Activated naive CD4-positive, alpha-beta T cell treated with anti-CD3 and anti-CD28 coated beads for 36 hours (primary cell): ENCODE measurements at regions of chr6 and their contacts with region 1.

Region 1: GRCh38 chr6:42009966-42010891 is 40.1 kb upstream of the TAF8 start:
- DNase-seq: peak; percentile 86
- H3K4me3 Mint-ChIP-seq: peak overlapping the region; percentile 83
- H3K27ac Mint-ChIP-seq: peak overlapping the region; percentile 100
- H3K4me1 Mint-ChIP-seq: peaks cover 76% of the 10 kb centered on the region
- H3K27me3 Mint-ChIP-seq: no peaks in the 10 kb centered on the region

Region 2: GRCh38 chr6:41941280-41942066 is 68.8 kb before region 1 on chr6 and contains the start of gene CCND3:
- CTCF ChIA-PET with region 1: interaction called, 4 read pairs
- intact Hi-C with region 1: loop called (anchors 1 kb)
- DNase-seq: peak; percentile 93
- H3K4me3 Mint-ChIP-seq: peak within 1 kb of the TSS; percentile 100
- H3K27ac Mint-ChIP-seq: peak within 1 kb of the TSS; percentile 99
- H3K4me1 Mint-ChIP-seq: peaks cover 47% of the 10 kb centered on the region
- H3K27me3 Mint-ChIP-seq: no peaks in the 10 kb centered on the region
- total RNA-seq, gene CCND3: 1,152 to 1,165 TPM

Region 3: DNA sequence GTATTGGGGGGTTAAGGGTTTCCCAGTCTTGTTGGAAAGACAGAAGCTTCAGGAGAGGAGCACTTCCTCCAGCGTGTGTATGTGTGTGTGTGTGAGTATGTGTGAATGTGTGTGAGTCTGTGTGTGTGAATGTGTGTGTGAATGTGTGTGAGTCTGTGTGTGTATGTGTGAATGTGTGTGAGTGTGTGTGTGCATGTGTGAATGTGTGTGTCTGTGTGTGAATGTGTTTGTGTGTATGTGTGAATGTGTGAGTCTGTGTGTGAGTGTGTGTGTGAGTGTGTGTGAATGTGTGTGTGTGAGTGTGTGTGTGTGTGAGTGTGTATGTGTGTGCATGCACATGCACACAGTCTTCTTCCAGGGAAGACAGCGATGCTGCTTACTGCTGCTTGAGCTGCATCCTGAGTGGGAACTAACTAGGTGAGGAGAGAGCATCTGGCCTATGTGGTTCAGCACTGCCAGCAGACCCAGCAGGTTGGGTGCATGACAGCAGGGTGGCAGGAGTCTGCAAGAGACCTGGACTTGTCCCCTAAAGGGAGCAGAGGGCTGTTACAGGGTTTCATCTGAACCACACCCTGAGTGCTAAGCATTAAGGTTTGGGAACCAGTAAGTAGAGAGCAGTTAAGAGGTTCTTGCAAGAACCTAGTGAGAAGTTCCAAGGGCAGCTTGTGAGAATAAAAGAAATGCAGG is 45.9 kb before region 1 on chr6:
- CTCF ChIA-PET with region 1: interaction called, 4 read pairs
- intact Hi-C with region 1: loop called (anchors 1 kb)
- DNase-seq: peak; percentile 69
- H3K4me3 Mint-ChIP-seq: no peak overlapping the region
- H3K27ac Mint-ChIP-seq: peak overlapping the region; percentile 98
- H3K4me1 Mint-ChIP-seq: peaks cover 92% of the 10 kb centered on the region
- H3K27me3 Mint-ChIP-seq: no peaks in the 10 kb centered on the region

Region 4: GRCh38 chr6:41976794-41977484 is 33.3 kb before region 1 on chr6:
- CTCF ChIA-PET with region 1: no interaction called
- intact Hi-C with region 1: loop called (anchors 1 kb)
- DNase-seq: peak; percentile 81
- H3K4me3 Mint-ChIP-seq: peak overlapping the region; percentile 78
- H3K27ac Mint-ChIP-seq: peak overlapping the region; percentile 100
- H3K4me1 Mint-ChIP-seq: peaks cover 80% of the 10 kb centered on the region
- H3K27me3 Mint-ChIP-seq: no peaks in the 10 kb centered on the region

Region 5: DNA sequence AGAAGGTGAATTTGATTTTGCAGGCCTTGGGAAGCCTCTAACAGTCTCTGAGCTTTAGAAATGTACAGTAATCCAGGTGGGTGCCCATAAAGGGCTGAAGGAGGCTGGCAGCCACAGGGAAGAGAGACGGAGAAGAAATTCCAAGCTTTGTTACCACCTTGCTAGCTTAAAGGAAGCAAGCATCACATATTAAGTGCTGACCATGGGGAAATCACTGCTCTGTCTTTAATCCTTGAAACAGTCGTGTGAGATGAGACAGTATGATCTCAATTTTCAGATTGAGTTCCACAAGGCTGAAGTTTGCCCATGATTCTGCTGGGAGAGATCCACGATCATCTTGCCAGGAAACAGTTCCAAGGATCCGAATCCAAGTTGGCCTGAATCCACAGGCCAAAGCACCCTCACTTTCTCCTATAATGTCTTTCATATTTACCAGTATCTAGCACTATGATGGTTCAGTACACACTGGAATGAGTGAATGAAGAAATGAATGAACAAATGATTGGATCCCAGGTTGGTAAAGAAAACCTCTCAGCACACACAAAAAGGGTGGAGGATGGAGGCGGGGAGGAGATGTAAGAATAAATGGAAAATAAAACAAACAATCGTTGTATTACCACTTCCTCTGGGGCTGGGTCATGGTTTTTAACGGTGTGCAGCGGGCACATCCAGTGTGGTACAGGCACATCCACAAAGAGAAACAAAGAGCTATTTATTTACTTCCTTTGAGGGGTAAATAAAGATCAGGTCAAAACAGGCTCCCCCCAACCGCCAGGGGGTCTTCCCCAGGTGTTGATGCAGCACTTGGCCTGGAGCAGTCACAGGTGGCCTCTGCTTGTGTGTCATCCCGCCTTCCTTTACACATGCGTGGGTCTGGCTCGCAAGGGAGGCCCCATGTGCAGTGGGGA is 11.9 kb after region 1 on chr6:
- CTCF ChIA-PET with region 1: interaction called, 4 read pairs
- intact Hi-C with region 1: loop called (anchors 1 kb)
- DNase-seq: peak; percentile 91
- H3K4me3 Mint-ChIP-seq: peak overlapping the region; percentile 63
- H3K27ac Mint-ChIP-seq: peak overlapping the region; percentile 99
- H3K4me1 Mint-ChIP-seq: peaks cover 89% of the 10 kb centered on the region
- H3K27me3 Mint-ChIP-seq: no peaks in the 10 kb centered on the region

Region 6: DNA sequence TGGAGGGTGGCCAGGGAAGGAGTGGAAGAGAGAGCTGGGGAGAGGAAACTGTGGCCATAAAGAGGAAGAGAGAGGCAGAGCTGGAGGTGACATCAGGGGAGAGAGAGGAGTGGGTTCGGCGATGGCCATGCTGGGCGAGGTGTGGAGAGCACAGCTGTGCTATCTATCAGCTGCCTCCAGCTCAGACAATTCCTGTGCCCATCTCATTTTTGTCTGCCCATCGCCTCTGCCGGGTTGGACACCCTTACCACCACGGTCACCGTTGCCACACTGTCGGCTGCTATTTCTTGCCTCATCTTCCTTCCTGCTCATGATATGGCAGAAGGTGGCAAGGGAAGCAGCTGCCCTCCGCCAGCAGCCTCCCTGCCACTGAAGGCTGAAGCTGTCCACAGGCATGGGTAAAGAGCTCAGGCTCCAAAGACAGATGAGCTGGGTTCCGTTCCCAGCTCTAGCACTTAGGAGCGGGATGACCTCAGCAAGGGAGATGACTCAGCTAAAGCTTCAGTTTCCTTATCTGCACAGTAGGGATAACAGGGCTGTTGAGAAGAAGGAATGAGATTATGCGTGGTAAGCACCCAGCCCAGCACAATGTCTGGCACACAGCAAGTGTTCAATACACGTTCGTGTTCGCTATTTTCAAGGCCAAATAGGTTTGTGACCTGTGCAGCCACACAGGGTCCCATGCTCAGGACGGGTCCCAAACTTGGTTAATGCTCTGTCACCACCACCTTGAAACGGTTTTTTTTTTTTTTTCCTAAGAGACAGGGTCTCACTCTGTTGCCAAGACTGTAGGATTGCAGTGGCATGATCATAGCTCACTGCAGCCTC is 18.2 kb after region 1 on chr6:
- CTCF ChIA-PET with region 1: interaction called, 4 read pairs
- intact Hi-C with region 1: loop called (anchors 1 kb)
- DNase-seq: peak; percentile 70
- H3K4me3 Mint-ChIP-seq: peak overlapping the region; percentile 68
- H3K27ac Mint-ChIP-seq: peak overlapping the region; percentile 99
- H3K4me1 Mint-ChIP-seq: peaks cover 94% of the 10 kb centered on the region
- H3K27me3 Mint-ChIP-seq: no peaks in the 10 kb centered on the region

Region 7: DNA sequence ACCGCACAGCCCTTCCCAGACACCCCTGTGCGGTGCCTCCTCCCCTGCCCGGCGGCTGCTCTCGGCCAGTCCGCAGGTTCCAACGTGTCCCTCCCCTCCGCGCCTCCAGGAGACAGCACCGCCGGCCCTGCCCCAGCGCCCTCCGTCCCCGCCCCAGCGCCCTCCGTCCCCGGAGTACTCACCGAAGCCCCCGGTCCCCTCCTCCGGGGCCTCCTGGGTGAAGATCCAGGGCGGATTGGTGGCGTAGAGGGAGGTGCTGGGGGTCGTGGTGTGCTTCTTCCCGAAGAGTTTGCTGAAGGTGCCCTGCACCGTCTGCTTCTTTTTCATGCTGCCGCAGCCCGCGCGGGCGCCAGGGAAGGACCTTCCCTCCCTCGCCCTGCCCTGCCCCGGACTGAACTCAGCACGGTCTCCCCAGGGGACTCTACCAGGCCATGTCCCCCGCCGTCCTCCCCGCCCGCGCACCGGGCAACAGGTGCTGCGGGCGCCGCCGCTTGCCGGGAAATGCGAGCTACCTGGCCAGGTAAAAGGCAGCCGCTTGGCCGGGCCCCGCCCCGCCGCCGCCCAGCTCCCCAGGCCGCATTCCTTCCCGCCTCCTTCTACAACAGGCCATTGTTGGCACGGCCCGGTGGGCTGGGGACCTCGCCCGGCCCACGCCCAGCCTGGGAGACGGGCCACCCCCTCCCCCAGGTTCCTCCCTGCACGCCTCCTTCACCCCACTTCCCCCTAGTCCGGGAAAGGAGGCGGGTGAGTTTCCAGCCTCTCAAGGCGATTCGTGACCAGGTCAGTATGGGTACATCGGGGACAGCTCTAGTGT is 132.1 kb after region 1 on chr6 and contains the start of gene C6orf132:
- CTCF ChIA-PET with region 1: no interaction called
- intact Hi-C with region 1: no loop called
- DNase-seq: no peak
- H3K4me3 Mint-ChIP-seq: peak within 1 kb of the TSS; percentile 59
- H3K27ac Mint-ChIP-seq: no peak within 1 kb of the TSS
- H3K4me1 Mint-ChIP-seq: peaks cover 3% of the 10 kb centered on the region
- H3K27me3 Mint-ChIP-seq: peaks cover 26% of the 10 kb centered on the region
- total RNA-seq, gene C6orf132: 0.12 to 0.14 TPM